HepG2 (cell line): ENCODE measurements at regions of chr2 and their contacts with region 1.

Region 1: GRCh38 chr2:24058564-24059271 is 9.2 kb downstream of the FKBP1B start:
- DNase-seq: no peak
- ATAC-seq: no peak
- H3K4me3 ChIP-seq: no peak overlapping the region
- H3K27ac ChIP-seq: no peak overlapping the region
- H3K4me1 ChIP-seq: peaks cover 7% of the 10 kb centered on the region
- H3K27me3 ChIP-seq: no peaks in the 10 kb centered on the region
- CTCF ChIP-seq: no peak
- EP300 ChIP-seq: no peak
- POLR2A ChIP-seq: no peak
- RAD21 ChIP-seq: no peak

Region 2: DNA sequence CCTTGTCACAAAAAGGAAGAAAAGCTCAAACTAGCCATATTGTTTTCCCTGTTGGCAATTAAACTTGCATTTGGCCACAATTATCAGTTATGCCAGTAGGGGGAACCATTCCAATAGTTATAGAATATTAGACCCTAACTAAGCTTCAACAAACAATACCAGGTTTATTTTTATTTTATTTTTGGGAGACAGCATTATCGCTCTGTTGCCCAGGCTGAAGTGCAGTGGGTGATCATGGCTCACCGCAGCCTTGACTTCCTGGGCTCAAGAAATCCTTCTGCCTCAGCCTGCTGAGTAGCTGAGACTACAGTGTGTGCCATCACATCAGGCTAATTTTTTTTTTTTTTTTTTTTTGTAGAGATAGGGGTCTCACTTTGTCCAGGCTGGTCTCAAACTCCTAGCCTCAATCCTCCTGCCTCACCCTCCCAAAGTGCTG is 233.9 kb before region 1 on chr2:
- CTCF ChIA-PET with region 1: interaction called, 7 read pairs
- POLR2A ChIA-PET with region 1: no interaction called
- in situ Hi-C with region 1: no loop called
- intact Hi-C with region 1: loop called (anchors 1 kb)
- DNase-seq: peak; percentile 51
- ATAC-seq: peak; percentile 78
- H3K4me3 ChIP-seq: no peak overlapping the region
- H3K27ac ChIP-seq: no peak overlapping the region
- H3K4me1 ChIP-seq: peaks cover 8% of the 10 kb centered on the region
- H3K27me3 ChIP-seq: no peaks in the 10 kb centered on the region
- CTCF ChIP-seq: peak; percentile 77
- EP300 ChIP-seq: no peak
- POLR2A ChIP-seq: no peak
- RAD21 ChIP-seq: peak; percentile 47; the same call in 1 of the 2 replicates